ENCODE measurements at regions of chr21 and their contacts with region 1.

Region 1: GRCh38 chr21:21076491-21076890 is 78.3 kb downstream of the NCAM2 start:
- DNase-seq: no peak
- ATAC-seq: no peak
- H3K4me3 ChIP-seq: no peak overlapping the region
- H3K27ac ChIP-seq: no peak overlapping the region
- H3K4me1 ChIP-seq: no peaks in the 10 kb centered on the region
- H3K27me3 ChIP-seq: no peaks in the 10 kb centered on the region
- CTCF ChIP-seq: no peak

Region 2: GRCh38 chr21:21018821-21019220 is 57.7 kb before region 1 on chr21:
- intact Hi-C with region 1: loop called in 1 of 3 experiments (anchors 10 kb)
- DNase-seq: no peak
- ATAC-seq: no peak
- H3K4me3 ChIP-seq: no peak overlapping the region
- H3K27ac ChIP-seq: no peak overlapping the region
- H3K4me1 ChIP-seq: no peaks in the 10 kb centered on the region
- H3K27me3 ChIP-seq: no peaks in the 10 kb centered on the region
- CTCF ChIP-seq: no peak

Region 3: GRCh38 chr21:21146587-21147373 is 70.3 kb after region 1 on chr21:
- intact Hi-C with region 1: no loop called
- DNase-seq: no peak
- ATAC-seq: no peak
- H3K4me3 ChIP-seq: no peak overlapping the region
- H3K27ac ChIP-seq: no peak overlapping the region
- H3K4me1 ChIP-seq: no peaks in the 10 kb centered on the region
- H3K27me3 ChIP-seq: no peaks in the 10 kb centered on the region
- CTCF ChIP-seq: no peak

Measured in pancreas (tissue), 10 donors.